H1 (cell line): ENCODE measurements at regions of chr11 and their contacts with region 1.

Region 1: DNA sequence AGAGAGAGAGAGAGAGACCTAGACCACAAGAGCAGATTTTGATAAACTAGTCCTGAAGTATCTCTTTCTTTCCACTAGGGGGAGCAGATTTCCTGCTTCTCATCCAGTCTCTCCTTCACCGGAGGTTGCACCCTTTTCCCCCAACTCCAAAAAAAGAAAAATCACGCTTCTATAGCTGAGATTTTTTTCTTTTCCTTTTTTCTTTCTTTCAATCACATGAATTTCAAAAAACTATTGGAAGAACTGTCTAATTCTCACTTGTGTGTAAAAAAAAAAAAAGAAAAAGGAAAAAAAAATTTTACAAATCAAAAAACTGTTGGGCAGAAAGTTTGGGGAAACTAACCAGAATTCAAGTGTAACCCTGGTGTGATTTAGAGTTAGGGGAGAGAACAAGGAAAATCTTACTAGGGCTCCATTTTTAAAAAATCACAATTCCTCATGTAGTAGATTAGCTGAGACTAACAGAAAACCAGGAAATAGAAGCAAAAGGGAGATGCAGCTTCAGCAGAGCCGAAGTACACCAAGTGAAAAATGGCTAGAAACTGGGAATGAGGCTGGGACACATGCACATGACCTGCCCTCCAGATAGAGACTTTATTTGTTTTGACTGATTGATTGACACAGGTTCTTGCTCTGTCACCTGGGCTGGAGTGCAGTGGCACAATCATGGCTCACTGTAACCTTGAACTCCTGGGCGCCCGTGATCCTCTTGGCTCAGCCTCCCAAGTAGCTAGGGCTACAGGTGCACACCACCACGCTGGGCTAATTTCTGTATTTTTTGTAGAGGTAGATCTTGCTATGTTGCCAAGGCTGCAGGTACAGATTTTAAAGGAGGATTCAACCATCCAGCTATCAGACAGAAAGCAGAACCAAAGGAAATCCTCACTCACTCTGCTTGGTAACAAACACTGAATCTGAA is 27.1 kb downstream of the SDHD start:
- DNase-seq: no peak
- H3K4me3 ChIP-seq: no peak overlapping the region
- H3K27ac ChIP-seq: no peak overlapping the region
- H3K4me1 ChIP-seq: no peaks in the 10 kb centered on the region
- H3K27me3 ChIP-seq: no peaks in the 10 kb centered on the region
- CTCF ChIP-seq: peak in 2 of 3 experiments; percentile 53 to 59; a peak in 3 of 4 replicates
- EP300 ChIP-seq: no peak
- POLR2A ChIP-seq: no peak
- RAD21 ChIP-seq: peak; percentile 64 to 65

Region 2: GRCh38 chr11:112100462-112100861 is 13.3 kb before region 1 on chr11:
- CTCF ChIA-PET with region 1: interaction called, 104 read pairs
- POLR2A ChIA-PET with region 1: interaction called, 3 read pairs
- DNase-seq: no peak
- H3K4me3 ChIP-seq: no peak overlapping the region
- H3K27ac ChIP-seq: no peak overlapping the region
- H3K4me1 ChIP-seq: no peaks in the 10 kb centered on the region
- H3K27me3 ChIP-seq: no peaks in the 10 kb centered on the region
- CTCF ChIP-seq: no peak
- EP300 ChIP-seq: no peak
- POLR2A ChIP-seq: no peak
- RAD21 ChIP-seq: no peak

Region 3: DNA sequence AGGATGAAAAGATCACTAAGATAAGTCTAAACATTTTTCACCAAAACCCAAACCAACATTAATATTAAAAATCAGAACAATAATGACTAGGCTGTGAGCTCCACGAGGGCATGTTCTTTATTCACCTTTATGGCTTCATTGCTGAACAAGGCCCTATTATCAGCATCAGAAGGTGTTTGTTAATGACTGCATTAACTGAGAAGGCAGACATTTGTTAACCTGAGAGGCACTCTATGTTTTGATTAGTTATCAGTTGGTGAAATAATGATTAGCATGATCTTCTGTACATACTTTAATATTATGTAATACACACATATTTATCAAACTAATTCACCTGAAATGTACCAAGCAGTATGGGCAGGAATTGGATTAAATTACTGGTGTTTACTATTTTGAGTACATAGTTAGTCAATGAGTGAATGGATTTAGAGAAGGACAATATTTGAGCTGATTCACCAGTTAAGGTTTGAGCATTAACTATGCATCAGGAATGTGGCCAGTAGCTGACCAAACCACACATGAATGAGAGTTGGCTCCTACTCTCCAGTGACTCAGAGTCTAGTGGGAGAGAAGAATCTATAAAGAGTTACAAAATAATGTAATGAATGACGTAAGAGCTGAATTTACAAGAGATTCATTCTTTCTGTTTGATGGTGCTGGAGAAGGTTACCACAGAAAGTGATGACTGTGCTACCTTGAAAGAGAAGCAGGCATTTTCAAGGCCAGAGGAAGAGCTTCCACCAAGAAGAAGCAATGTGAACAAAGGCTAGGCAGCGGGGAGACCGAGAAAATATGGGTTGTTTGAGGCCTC is 43.4 kb after region 1 on chr11:
- CTCF ChIA-PET with region 1: interaction called, 16 read pairs
- POLR2A ChIA-PET with region 1: no interaction called
- DNase-seq: no peak
- H3K4me3 ChIP-seq: no peak overlapping the region
- H3K27ac ChIP-seq: no peak overlapping the region
- H3K4me1 ChIP-seq: no peaks in the 10 kb centered on the region
- H3K27me3 ChIP-seq: no peaks in the 10 kb centered on the region
- CTCF ChIP-seq: no peak
- EP300 ChIP-seq: no peak
- POLR2A ChIP-seq: no peak
- RAD21 ChIP-seq: no peak

Region 4: GRCh38 chr11:112174789-112175598 is 61.2 kb after region 1 on chr11 and contains the start of gene BCO2:
- CTCF ChIA-PET with region 1: interaction called, 38 read pairs
- POLR2A ChIA-PET with region 1: no interaction called
- DNase-seq: peak in 1 of 2 experiments; percentile 81
- H3K4me3 ChIP-seq: peak within 1 kb of the TSS in 1 of 4 experiments; percentile 53; a peak in 4 of 8 replicates
- H3K27ac ChIP-seq: no peak within 1 kb of the TSS
- H3K4me1 ChIP-seq: peaks cover 0 to 3% (median 0%) of the 10 kb centered on the region in 4 experiments; a peak in 1 of 7 replicates
- H3K27me3 ChIP-seq: no peaks in the 10 kb centered on the region
- CTCF ChIP-seq: peak in 2 of 3 experiments; percentile 59 to 87; a peak in 2 of 4 replicates
- EP300 ChIP-seq: no peak
- POLR2A ChIP-seq: no peak
- RAD21 ChIP-seq: peak; percentile 67 to 73
- total RNA-seq, gene BCO2: 0.63 and 0.82 TPM in 2 replicates